Activated CD8-positive, alpha-beta T cell treated with anti-CD3 and anti-CD28 coated beads for 36 hours (primary cell): ENCODE measurements at regions of chr1 and their contacts with region 1.

Region 1: DNA sequence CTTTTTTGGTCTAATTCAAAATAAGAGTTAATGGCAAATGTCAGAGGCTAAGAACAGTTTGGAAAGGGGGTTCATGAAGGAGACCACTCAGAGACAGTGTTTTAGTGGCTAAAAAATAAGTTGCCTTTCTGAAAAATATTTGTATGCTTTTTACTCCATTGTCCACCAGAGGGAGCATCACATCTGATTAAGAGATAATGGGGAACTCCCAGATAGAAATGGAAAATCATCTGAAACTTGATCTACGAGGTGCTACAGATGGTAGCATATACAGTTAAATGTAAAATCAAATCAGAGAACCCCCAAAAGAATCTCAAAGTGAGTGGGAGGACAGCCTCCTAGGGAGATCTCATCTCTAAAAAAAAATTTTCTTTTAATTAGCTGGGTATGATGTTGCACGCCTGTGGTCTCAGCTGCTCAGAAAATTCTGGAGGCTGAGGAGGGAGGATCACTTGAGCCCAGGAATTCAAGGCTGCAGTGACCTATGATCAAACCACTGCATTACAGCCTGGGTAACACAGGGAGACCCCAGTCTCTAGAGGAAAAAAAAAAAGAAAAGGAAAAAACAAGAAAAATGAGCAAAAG is 9.7 kb downstream of the SMYD3 start:
- DNase-seq: peak; percentile 14
- ATAC-seq: peak; percentile 85
- H3K4me3 Mint-ChIP-seq: no peak overlapping the region
- H3K27ac Mint-ChIP-seq: peak overlapping the region; percentile 61
- H3K4me1 Mint-ChIP-seq: peaks cover 13% of the 10 kb centered on the region
- H3K27me3 Mint-ChIP-seq: no peaks in the 10 kb centered on the region
- CTCF ChIP-seq: peak; percentile 74

Region 2: DNA sequence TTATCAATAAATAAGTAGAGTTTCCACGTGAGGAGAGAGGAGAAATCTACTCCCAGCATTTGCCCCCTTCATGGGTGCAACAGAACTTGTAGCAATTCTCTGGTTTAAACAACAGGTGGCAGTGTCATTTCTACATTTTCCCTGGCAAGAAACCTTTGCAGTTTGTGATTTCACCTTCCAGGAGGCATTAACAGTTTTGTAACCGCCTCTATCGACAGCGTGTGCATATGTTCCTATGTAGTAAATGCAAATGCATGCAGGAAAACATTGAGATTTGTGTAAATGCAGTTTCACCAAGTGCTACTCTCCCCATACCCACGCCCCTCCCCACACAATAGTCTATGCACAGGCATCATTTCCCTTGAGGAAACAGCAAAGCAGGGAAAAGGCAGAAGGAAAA is 485.1 kb before region 1 on chr1:
- CTCF ChIA-PET with region 1: interaction called, 6 read pairs
- POLR2A ChIA-PET with region 1: no interaction called
- intact Hi-C with region 1: loop called (anchors 5 kb)
- DNase-seq: peak; percentile 2
- ATAC-seq: peak; percentile 51
- H3K4me3 Mint-ChIP-seq: no peak overlapping the region
- H3K27ac Mint-ChIP-seq: no peak overlapping the region
- H3K4me1 Mint-ChIP-seq: no peaks in the 10 kb centered on the region
- H3K27me3 Mint-ChIP-seq: no peaks in the 10 kb centered on the region
- CTCF ChIP-seq: peak; percentile 66

Region 3: DNA sequence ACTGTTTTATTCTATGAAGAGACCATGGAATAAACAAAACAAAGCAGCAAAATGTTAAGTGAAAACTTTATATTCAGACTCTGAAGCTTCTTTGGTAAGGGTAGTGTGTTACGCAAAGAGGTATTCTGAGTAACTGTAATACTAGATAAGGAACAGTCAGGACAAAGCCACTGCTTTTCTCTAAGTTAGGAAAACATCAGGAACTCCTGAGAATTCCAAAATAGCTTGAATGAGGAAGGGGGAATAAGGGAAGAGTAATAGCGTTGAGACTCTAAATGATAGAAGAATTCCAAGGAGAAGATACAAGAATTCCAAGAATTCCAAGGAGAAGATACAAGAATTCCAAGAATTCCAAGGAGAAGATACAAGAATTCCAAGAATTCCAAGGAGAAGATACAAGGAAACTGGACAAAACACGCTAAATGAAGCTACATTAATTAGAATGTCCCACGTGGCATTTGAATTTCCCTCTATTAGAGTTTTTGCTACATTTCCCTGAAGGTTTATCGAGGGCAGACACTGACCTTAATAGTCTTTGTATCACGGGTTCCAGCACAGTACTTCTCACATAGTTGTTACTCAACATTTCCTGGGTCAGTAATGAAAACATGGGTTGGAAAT is 61.9 kb before region 1 on chr1:
- CTCF ChIA-PET with region 1: no interaction called
- POLR2A ChIA-PET with region 1: no interaction called
- intact Hi-C with region 1: no loop called
- DNase-seq: no peak
- ATAC-seq: no peak
- H3K4me3 Mint-ChIP-seq: no peak overlapping the region
- H3K27ac Mint-ChIP-seq: no peak overlapping the region
- H3K4me1 Mint-ChIP-seq: peaks cover 7% of the 10 kb centered on the region
- H3K27me3 Mint-ChIP-seq: no peaks in the 10 kb centered on the region
- CTCF ChIP-seq: no peak

Region 4: GRCh38 chr1:246703576-246703975 is 206.2 kb after region 1 on chr1:
- CTCF ChIA-PET with region 1: interaction called, 3 read pairs
- POLR2A ChIA-PET with region 1: no interaction called
- intact Hi-C with region 1: loop called (anchors 5 kb)
- DNase-seq: no peak
- ATAC-seq: no peak
- H3K4me3 Mint-ChIP-seq: no peak overlapping the region
- H3K27ac Mint-ChIP-seq: no peak overlapping the region
- H3K4me1 Mint-ChIP-seq: peaks cover 5% of the 10 kb centered on the region
- H3K27me3 Mint-ChIP-seq: no peaks in the 10 kb centered on the region
- CTCF ChIP-seq: no peak